GM10248 (cell line): ENCODE measurements at regions of chr18 and their contacts with region 1.

Region 1: GRCh38 chr18:46073474-46074331 is 1.6 kb upstream of the PSTPIP2 start:
- DNase-seq: peak; percentile 55
- CTCF ChIP-seq: peak; percentile 62

Region 2: GRCh38 chr18:45664824-45665763 is 408.6 kb before region 1 on chr18:
- CTCF ChIA-PET with region 1: interaction called, 73 read pairs
- POLR2A ChIA-PET with region 1: no interaction called
- DNase-seq: peak; percentile 76
- CTCF ChIP-seq: peak; percentile 92

Region 3: DNA sequence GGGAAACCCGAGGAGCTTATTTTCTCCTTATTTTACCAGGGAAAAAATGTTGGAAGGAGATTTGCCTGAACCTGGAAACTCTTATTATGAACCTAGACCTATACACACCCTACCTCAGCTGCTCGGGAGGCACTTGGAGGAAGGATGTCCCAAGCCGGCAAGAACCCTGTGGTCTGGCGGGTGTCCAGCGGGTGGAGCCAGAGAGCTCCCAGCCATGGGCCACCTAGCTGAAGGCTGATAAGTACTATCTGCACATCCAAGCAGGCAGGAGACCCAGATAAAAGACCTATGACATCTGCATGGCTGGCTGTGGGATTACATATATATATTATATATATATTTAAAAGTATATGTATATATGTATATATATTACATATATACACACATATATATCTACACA is 350.8 kb before region 1 on chr18:
- CTCF ChIA-PET with region 1: interaction called, 33 read pairs
- POLR2A ChIA-PET with region 1: no interaction called
- DNase-seq: peak; percentile 80
- CTCF ChIP-seq: peak; percentile 82

Region 4: DNA sequence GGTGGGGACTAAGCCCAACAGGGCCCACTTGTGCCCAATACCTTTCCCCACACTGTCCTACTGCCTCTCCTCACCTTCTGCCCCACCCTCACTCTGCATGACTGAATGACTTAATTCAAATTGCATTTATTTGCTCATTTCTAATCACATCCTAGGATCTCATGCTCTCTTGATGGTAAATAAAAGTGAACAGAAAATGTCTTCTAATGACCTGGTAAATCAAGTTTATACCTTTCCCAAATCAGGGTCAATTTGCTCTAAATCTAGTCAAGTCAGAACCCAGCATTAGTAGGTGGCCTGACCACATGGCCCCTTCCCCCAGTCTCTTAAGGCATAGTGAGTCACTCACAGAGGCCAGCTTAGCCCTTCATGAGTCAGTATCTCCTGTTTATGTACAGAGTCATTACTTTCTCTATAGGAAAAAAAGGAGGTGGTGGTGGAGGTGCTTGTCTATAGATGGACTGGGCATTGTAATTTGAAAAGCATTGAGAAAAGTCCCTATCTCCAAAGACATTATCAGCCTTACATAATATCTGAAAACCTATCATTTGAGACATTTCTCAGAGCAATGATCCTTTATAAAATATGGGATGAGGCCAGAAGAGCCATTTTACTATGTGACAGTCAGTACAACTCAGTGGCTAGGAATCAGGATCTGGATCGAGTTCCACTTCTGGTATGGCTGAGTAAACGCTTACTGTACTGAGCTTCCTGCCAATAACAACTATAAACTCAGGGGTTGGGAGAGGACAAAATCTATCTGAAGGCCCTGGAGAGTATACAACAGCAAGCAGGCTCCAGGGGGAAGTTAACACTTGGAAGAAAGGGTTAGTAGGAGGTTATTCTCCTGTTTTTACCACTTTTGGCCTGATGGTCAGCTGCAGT is 270.9 kb before region 1 on chr18:
- CTCF ChIA-PET with region 1: no interaction called
- POLR2A ChIA-PET with region 1: no interaction called
- DNase-seq: no peak
- CTCF ChIP-seq: no peak

Region 5: GRCh38 chr18:45920367-45920766 is 153.3 kb before region 1 on chr18:
- CTCF ChIA-PET with region 1: interaction called, 11 read pairs
- POLR2A ChIA-PET with region 1: no interaction called
- DNase-seq: no peak
- CTCF ChIP-seq: no peak

Region 6: GRCh38 chr18:45993389-45993788 is 80.3 kb before region 1 on chr18:
- CTCF ChIA-PET with region 1: interaction called, 10 read pairs
- POLR2A ChIA-PET with region 1: no interaction called
- DNase-seq: no peak
- CTCF ChIP-seq: no peak

Region 7: DNA sequence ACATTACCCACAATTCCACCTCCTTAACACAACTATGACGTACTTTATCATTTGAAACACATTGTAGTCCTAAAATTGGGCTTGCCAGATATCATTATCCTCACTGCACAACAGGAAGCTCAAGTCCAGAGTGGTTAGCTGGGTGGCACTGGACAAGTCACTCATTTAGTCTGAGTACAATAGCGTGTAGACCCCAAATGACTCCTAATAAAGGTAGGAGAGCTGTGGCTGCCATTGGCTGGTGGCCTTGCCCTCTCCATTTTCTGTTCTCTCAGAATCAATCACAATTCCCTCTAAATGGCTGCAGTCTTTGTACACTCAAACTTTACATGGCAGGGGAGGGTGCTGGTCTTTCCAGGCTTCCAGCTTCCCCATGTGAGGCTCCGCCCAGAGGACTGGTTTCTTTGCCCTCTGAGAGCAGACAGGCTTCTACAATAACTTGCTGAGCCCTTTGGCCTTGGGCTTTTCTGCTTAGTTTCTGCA is 13.3 kb before region 1 on chr18:
- CTCF ChIA-PET with region 1: interaction called, 18 read pairs
- POLR2A ChIA-PET with region 1: interaction called, 3 read pairs
- DNase-seq: no peak
- CTCF ChIP-seq: no peak

Region 8: GRCh38 chr18:46097801-46098615 is 24.3 kb after region 1 on chr18 and contains the start of gene ATP5F1A:
- CTCF ChIA-PET with region 1: interaction called, 24 read pairs
- POLR2A ChIA-PET with region 1: no interaction called
- DNase-seq: peak; percentile 90
- CTCF ChIP-seq: no peak

Region 9: DNA sequence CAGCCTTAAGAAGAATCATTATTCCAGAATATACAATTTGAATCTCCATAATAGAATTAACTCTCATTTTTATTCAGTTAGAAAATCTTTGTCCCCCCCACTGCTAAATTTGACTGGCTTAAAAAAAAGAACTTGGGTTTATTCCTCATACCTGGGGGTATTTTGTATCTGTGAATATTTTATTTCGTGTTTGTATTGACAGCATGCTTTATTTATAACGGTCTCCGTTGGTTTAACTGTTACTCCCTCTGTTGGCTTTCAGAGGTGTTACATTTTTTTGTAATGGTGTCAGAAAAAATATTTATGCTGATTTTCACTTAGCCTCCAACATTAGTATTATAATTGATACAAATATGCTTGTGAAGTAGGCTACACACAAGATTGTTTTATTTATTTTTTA is 139.6 kb after region 1 on chr18:
- CTCF ChIA-PET with region 1: no interaction called
- POLR2A ChIA-PET with region 1: no interaction called
- DNase-seq: peak; percentile 53
- CTCF ChIP-seq: peak; percentile 43